Activated CD4-positive, alpha-beta T cell treated with anti-CD3 and anti-CD28 coated beads for 36 hours (primary cell): ENCODE measurements at regions of chr16 and their contacts with region 1.

Region 1: GRCh38 chr16:81006814-81007696 is at the starts of genes CENPN and CMC2:
- DNase-seq: peak; percentile 98
- ATAC-seq: peak; percentile 86
- H3K4me3 Mint-ChIP-seq: peak within 1 kb of the TSS; percentile 98
- H3K27ac Mint-ChIP-seq: peak within 1 kb of the TSS; percentile 100
- H3K4me1 Mint-ChIP-seq: peaks cover 48% of the 10 kb centered on the region
- H3K27me3 Mint-ChIP-seq: no peaks in the 10 kb centered on the region
- total RNA-seq, gene CENPN: 45.7 to 56.3 TPM
- total RNA-seq, gene CMC2: 100.0 to 114 TPM

Region 2: DNA sequence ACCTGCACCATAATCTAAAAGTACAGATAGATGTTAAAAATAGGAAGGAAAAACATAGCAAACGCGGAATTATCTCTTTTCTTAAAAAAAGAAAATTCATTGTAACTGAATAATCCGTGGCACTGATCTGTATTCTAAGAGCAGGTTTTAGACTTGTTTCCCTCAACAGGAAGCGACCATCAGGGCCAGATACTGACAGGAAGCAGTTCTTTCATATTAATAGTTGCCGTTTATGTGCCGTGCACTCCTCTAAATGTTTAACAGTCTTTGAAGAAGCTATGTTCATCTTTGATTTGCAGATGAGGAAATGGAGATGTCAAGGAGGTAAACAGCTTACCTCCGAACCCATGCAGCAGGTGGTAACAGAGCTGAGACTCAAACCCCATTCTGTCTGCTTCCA is 442.7 kb before region 1 on chr16:
- CTCF ChIA-PET with region 1: no interaction called
- POLR2A ChIA-PET with region 1: no interaction called
- intact Hi-C with region 1: no loop called
- DNase-seq: no peak
- ATAC-seq: no peak
- H3K4me3 Mint-ChIP-seq: no peak overlapping the region
- H3K27ac Mint-ChIP-seq: peak overlapping the region; percentile 21
- H3K4me1 Mint-ChIP-seq: peaks cover 29% of the 10 kb centered on the region
- H3K27me3 Mint-ChIP-seq: peaks cover 3% of the 10 kb centered on the region

Region 3: GRCh38 chr16:80804056-80804450 is 203.0 kb before region 1 on chr16:
- CTCF ChIA-PET with region 1: interaction called, 3 read pairs
- POLR2A ChIA-PET with region 1: no interaction called
- intact Hi-C with region 1: loop called (anchors 1 to 10 kb)
- DNase-seq: peak; percentile 81
- ATAC-seq: peak; percentile 48
- H3K4me3 Mint-ChIP-seq: peak overlapping the region; percentile 84
- H3K27ac Mint-ChIP-seq: peak overlapping the region; percentile 89
- H3K4me1 Mint-ChIP-seq: peaks cover 32% of the 10 kb centered on the region
- H3K27me3 Mint-ChIP-seq: no peaks in the 10 kb centered on the region

Region 4: DNA sequence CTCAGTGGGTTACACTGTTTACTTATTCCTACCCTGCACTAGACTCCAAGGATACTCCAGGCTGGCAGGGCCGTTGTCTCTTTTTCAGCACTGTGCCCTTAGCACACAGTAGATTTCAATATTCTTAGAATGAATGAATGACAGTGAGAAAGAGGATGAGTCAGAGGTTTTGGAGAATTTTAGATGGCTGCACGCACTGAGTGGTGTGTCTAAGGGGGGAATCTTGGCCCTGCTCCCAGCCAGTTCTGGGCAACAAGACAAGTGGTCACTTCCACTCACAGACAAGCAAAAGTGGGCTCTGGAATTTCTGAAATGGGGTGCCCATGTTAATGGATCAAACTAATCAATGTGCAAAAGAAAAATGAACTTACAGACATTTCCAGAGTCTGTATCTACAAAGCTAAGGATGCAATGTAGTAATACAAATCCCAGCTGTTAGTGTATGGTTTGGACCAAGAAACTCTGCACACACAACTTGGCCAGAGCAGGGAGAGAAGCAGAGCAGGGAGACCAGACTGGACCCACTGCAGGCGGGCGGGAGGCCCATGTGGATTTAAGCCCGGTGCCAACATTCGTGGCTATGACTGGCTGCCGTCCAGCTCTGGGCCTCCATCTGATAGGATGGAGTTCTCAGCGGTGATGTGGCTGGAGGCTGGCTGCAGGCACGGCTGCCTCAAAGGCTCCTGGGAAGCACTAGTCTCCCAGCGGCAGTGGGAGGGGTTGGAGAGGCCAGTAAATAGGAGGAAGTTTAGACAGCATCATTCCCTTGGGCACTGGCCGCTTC is 107.1 kb before region 1 on chr16:
- CTCF ChIA-PET with region 1: no interaction called
- POLR2A ChIA-PET with region 1: no interaction called
- intact Hi-C with region 1: no loop called
- DNase-seq: no peak
- ATAC-seq: no peak
- H3K4me3 Mint-ChIP-seq: no peak overlapping the region
- H3K27ac Mint-ChIP-seq: no peak overlapping the region
- H3K4me1 Mint-ChIP-seq: no peaks in the 10 kb centered on the region
- H3K27me3 Mint-ChIP-seq: no peaks in the 10 kb centered on the region

Region 5: GRCh38 chr16:80993307-80993706 is 13.7 kb before region 1 on chr16:
- CTCF ChIA-PET with region 1: interaction called, 17 read pairs
- POLR2A ChIA-PET with region 1: interaction called, 3 read pairs
- intact Hi-C with region 1: no loop called
- DNase-seq: no peak
- ATAC-seq: no peak
- H3K4me3 Mint-ChIP-seq: no peak overlapping the region
- H3K27ac Mint-ChIP-seq: no peak overlapping the region
- H3K4me1 Mint-ChIP-seq: peaks cover 49% of the 10 kb centered on the region
- H3K27me3 Mint-ChIP-seq: no peaks in the 10 kb centered on the region

Region 6: DNA sequence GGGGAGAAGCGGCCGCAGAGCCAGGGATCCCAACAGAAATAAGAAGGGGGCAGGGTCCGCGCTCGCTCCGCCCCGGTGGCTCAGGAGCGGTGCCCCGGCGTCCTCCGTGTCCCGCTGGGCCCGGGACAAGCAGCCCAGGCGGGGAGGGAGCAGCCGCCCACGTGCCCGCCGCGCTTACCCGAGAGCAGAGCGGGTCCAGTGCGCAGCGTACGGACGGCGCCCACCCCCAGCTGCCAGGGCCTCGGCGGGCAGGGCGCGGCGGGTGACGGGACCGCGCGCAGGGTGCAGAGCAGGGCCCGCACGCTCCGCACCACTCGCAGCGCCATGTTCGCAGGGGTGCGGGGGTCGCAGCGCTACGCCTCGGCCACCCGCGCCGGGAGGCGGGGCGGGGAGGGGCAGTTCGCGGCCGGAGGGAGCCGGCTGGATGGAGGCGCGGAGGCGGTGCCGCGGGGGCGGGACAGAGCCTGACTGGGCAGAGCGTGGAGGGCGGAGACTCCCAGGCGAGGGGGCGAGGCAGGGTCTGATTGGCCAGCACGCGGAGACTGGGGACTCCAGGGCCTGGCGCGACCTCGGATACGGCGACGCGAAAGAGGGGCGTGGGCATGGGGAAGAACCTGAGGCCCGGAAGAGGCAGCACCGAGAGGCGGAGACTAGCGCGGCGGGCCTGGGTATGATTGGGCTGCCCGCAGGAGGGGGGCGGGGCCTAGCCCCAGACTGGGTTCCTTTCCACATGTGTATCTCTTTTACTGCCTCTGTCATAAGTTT is 89.1 kb after region 1 on chr16 and contains the start of gene GCSH:
- CTCF ChIA-PET with region 1: interaction called, 4 read pairs
- POLR2A ChIA-PET with region 1: interaction called, 15 read pairs
- intact Hi-C with region 1: loop called (anchors 1 kb)
- DNase-seq: peak; percentile 99
- ATAC-seq: peak; percentile 99
- H3K4me3 Mint-ChIP-seq: peak within 1 kb of the TSS; percentile 72
- H3K27ac Mint-ChIP-seq: peak within 1 kb of the TSS; percentile 78
- H3K4me1 Mint-ChIP-seq: peaks cover 16% of the 10 kb centered on the region
- H3K27me3 Mint-ChIP-seq: no peaks in the 10 kb centered on the region
- total RNA-seq, gene GCSH: 22.2 to 24.9 TPM

Region 7: GRCh38 chr16:81444448-81445121 is 437.5 kb after region 1 on chr16 and contains the start of gene CMIP:
- CTCF ChIA-PET with region 1: no interaction called
- POLR2A ChIA-PET with region 1: no interaction called
- intact Hi-C with region 1: loop called in 1 of 2 experiments (anchors 2 kb)
- DNase-seq: peak; percentile 89
- ATAC-seq: peak; percentile 73
- H3K4me3 Mint-ChIP-seq: peak within 1 kb of the TSS; percentile 96
- H3K27ac Mint-ChIP-seq: peak within 1 kb of the TSS; percentile 93
- H3K4me1 Mint-ChIP-seq: peaks cover 34% of the 10 kb centered on the region
- H3K27me3 Mint-ChIP-seq: no peaks in the 10 kb centered on the region
- total RNA-seq, gene CMIP: 39.1 to 40.3 TPM

Region 8: GRCh38 chr16:82653550-82654511 is 1646.8 kb after region 1 on chr16:
- CTCF ChIA-PET with region 1: no interaction called
- POLR2A ChIA-PET with region 1: no interaction called
- intact Hi-C with region 1: loop called in 1 of 2 experiments (anchors 5 kb)
- DNase-seq: peak; percentile 72
- ATAC-seq: peak; percentile 77
- H3K4me3 Mint-ChIP-seq: peak overlapping the region; percentile 37
- H3K27ac Mint-ChIP-seq: peak overlapping the region; percentile 88
- H3K4me1 Mint-ChIP-seq: peaks cover 88% of the 10 kb centered on the region
- H3K27me3 Mint-ChIP-seq: peaks cover 2% of the 10 kb centered on the region